Activated naive CD4-positive, alpha-beta T cell treated with anti-CD3 and anti-CD28 coated beads for 36 hours (primary cell): ENCODE measurements at regions of chr13 and their contacts with region 1.

Region 1: GRCh38 chr13:46595136-46595886 is 42.3 kb downstream of the LRCH1 start:
- DNase-seq: no peak
- H3K4me3 Mint-ChIP-seq: no peak overlapping the region
- H3K27ac Mint-ChIP-seq: no peak overlapping the region
- H3K4me1 Mint-ChIP-seq: peaks cover 80% of the 10 kb centered on the region
- H3K27me3 Mint-ChIP-seq: no peaks in the 10 kb centered on the region

Region 2: GRCh38 chr13:46176756-46177155 is 418.6 kb before region 1 on chr13:
- CTCF ChIA-PET with region 1: no interaction called
- intact Hi-C with region 1: loop called (anchors 10 kb)
- DNase-seq: no peak
- H3K4me3 Mint-ChIP-seq: peak overlapping the region; percentile 72
- H3K27ac Mint-ChIP-seq: peak overlapping the region; percentile 98
- H3K4me1 Mint-ChIP-seq: peaks cover 56% of the 10 kb centered on the region
- H3K27me3 Mint-ChIP-seq: no peaks in the 10 kb centered on the region

Region 3: GRCh38 chr13:46341112-46341711 is 254.1 kb before region 1 on chr13:
- CTCF ChIA-PET with region 1: no interaction called
- intact Hi-C with region 1: loop called (anchors 5 kb)
- DNase-seq: peak; percentile 78
- H3K4me3 Mint-ChIP-seq: peak overlapping the region; percentile 63
- H3K27ac Mint-ChIP-seq: peak overlapping the region; percentile 92
- H3K4me1 Mint-ChIP-seq: peaks cover 52% of the 10 kb centered on the region
- H3K27me3 Mint-ChIP-seq: no peaks in the 10 kb centered on the region

Region 4: GRCh38 chr13:46507981-46508380 is 87.3 kb before region 1 on chr13:
- CTCF ChIA-PET with region 1: no interaction called
- intact Hi-C with region 1: no loop called
- DNase-seq: no peak
- H3K4me3 Mint-ChIP-seq: no peak overlapping the region
- H3K27ac Mint-ChIP-seq: no peak overlapping the region
- H3K4me1 Mint-ChIP-seq: no peaks in the 10 kb centered on the region
- H3K27me3 Mint-ChIP-seq: no peaks in the 10 kb centered on the region

Region 5: GRCh38 chr13:46577696-46578589 is 17.4 kb before region 1 on chr13:
- CTCF ChIA-PET with region 1: interaction called, 3 read pairs
- intact Hi-C with region 1: loop called (anchors 1 kb)
- DNase-seq: peak; percentile 11
- H3K4me3 Mint-ChIP-seq: no peak overlapping the region
- H3K27ac Mint-ChIP-seq: no peak overlapping the region
- H3K4me1 Mint-ChIP-seq: peaks cover 62% of the 10 kb centered on the region
- H3K27me3 Mint-ChIP-seq: no peaks in the 10 kb centered on the region

Region 6: DNA sequence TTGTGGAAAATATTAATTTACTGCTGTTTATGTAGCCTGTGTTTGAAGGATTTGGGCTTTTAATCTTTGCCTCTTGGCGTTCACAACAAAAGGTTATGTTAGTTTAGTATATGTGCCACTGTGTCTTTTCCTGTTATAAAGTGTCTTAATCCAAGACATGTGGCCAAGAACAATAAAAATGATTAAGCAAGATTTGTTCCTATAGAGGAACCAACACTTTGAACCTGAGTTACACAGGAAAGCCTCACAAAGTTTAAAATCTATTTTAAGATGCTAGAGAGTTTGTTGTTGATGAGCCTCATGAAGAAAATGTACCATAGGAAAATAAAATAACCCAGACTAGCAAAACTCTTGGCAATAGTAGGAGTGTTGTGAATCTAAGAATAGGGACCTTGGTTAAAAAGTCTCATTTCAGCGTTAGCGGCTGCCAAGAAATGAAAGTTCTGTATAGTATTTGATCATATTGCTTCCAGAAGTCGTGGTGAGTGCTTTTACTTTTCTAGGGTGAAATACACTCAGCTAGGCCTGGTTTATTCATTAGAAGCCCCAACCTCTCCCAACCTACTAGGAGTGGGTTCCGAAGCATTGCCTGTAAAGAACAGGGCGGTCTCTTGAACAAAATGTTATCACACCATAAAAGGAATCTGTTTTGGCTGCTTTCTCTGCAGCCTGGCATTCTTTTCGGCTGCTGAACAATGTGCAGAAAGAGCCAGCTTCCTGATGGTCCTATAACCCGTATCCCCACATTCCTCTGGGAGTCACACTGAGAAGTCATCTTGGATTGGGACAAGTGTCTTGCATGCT is 60.3 kb after region 1 on chr13:
- CTCF ChIA-PET with region 1: no interaction called
- intact Hi-C with region 1: loop called (anchors 2 kb)
- DNase-seq: peak; percentile 12
- H3K4me3 Mint-ChIP-seq: no peak overlapping the region
- H3K27ac Mint-ChIP-seq: no peak overlapping the region
- H3K4me1 Mint-ChIP-seq: peaks cover 36% of the 10 kb centered on the region
- H3K27me3 Mint-ChIP-seq: no peaks in the 10 kb centered on the region

Region 7: GRCh38 chr13:46668302-46668720 is 73.0 kb after region 1 on chr13:
- CTCF ChIA-PET with region 1: interaction called, 3 read pairs
- intact Hi-C with region 1: loop called (anchors 1 kb)
- DNase-seq: peak; percentile 58
- H3K4me3 Mint-ChIP-seq: peak overlapping the region; percentile 72
- H3K27ac Mint-ChIP-seq: peak overlapping the region; percentile 85
- H3K4me1 Mint-ChIP-seq: peaks cover 37% of the 10 kb centered on the region
- H3K27me3 Mint-ChIP-seq: no peaks in the 10 kb centered on the region

Region 8: GRCh38 chr13:46679369-46680120 is 84.2 kb after region 1 on chr13:
- CTCF ChIA-PET with region 1: interaction called, 3 read pairs
- intact Hi-C with region 1: loop called (anchors 2 kb)
- DNase-seq: peak; percentile 45
- H3K4me3 Mint-ChIP-seq: no peak overlapping the region
- H3K27ac Mint-ChIP-seq: no peak overlapping the region
- H3K4me1 Mint-ChIP-seq: peaks cover 16% of the 10 kb centered on the region
- H3K27me3 Mint-ChIP-seq: no peaks in the 10 kb centered on the region

Region 9: GRCh38 chr13:46874006-46874405 is 278.7 kb after region 1 on chr13:
- CTCF ChIA-PET with region 1: no interaction called
- intact Hi-C with region 1: no loop called
- DNase-seq: no peak
- H3K4me3 Mint-ChIP-seq: no peak overlapping the region
- H3K27ac Mint-ChIP-seq: no peak overlapping the region
- H3K4me1 Mint-ChIP-seq: no peaks in the 10 kb centered on the region
- H3K27me3 Mint-ChIP-seq: peaks cover 19% of the 10 kb centered on the region

Region 10: DNA sequence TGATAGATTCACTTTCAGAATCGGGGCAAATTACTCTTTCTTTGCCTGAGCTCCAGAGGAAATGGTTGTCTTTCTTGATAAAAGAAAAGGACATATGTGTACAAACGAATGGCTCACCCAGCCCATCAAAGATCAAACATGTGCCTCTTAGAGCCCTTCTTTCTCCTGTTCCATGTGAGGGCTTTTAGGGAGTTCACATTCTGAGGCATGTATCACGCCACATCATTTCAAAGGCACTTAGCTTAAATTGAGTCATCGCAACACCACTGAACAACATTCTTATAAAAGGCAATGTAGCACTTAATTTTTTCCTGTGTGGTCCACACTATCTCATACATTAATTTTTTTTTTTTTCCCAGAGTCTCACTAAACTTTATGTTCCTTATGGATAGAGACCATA is 884.8 kb after region 1 on chr13:
- CTCF ChIA-PET with region 1: no interaction called
- intact Hi-C with region 1: no loop called
- DNase-seq: no peak
- H3K4me3 Mint-ChIP-seq: no peak overlapping the region
- H3K27ac Mint-ChIP-seq: no peak overlapping the region
- H3K4me1 Mint-ChIP-seq: no peaks in the 10 kb centered on the region
- H3K27me3 Mint-ChIP-seq: no peaks in the 10 kb centered on the region